A549 (cell line): ENCODE measurements at regions of chr15 and their contacts with region 1.

Region 1: GRCh38 chr15:88859550-88859949 is 35.8 kb downstream of the HAPLN3 start:
- DNase-seq: no peak
- ATAC-seq: peak in 1 of 2 experiments; percentile 29; a peak in 3 of 6 replicates
- H3K4me3 ChIP-seq: no peak overlapping the region
- H3K27ac ChIP-seq: no peak overlapping the region
- H3K4me1 ChIP-seq: no peaks in the 10 kb centered on the region
- CTCF ChIP-seq: no peak
- EP300 ChIP-seq: no peak
- POLR2A ChIP-seq: no peak
- RAD21 ChIP-seq: no peak

Region 2: GRCh38 chr15:88872106-88872505 is 12.6 kb after region 1 on chr15:
- CTCF ChIA-PET with region 1: interaction called, 23 read pairs
- POLR2A ChIA-PET with region 1: no interaction called
- DNase-seq: no peak
- ATAC-seq: no peak; a peak in 1 of 6 replicates
- H3K4me3 ChIP-seq: no peak overlapping the region
- H3K27ac ChIP-seq: no peak overlapping the region
- H3K4me1 ChIP-seq: no peaks in the 10 kb centered on the region
- CTCF ChIP-seq: no peak
- EP300 ChIP-seq: no peak
- POLR2A ChIP-seq: no peak
- RAD21 ChIP-seq: no peak

Region 3: GRCh38 chr15:88904624-88905327 is 45.2 kb after region 1 on chr15:
- CTCF ChIA-PET with region 1: no interaction called
- POLR2A ChIA-PET with region 1: no interaction called
- DNase-seq: peak; percentile 82 to 89
- ATAC-seq: peak; percentile 64 to 88
- H3K4me3 ChIP-seq: no peak overlapping the region
- H3K27ac ChIP-seq: peak overlapping the region; percentile 49 to 71
- H3K4me1 ChIP-seq: peaks cover 33% of the 10 kb centered on the region
- CTCF ChIP-seq: peak; percentile 99
- EP300 ChIP-seq: no peak
- POLR2A ChIP-seq: no peak
- RAD21 ChIP-seq: peak; percentile 97